Activated naive CD4-positive, alpha-beta T cell treated with anti-CD3 and anti-CD28 coated beads for 36 hours (primary cell): ENCODE measurements at regions of chr6 and their contacts with region 1.

Region 1: GRCh38 chr6:30541515-30542403 is 14.5 kb downstream of the GNL1 start:
- DNase-seq: peak; percentile 89
- H3K4me3 Mint-ChIP-seq: peak overlapping the region; percentile 71
- H3K27ac Mint-ChIP-seq: peak overlapping the region; percentile 20
- H3K4me1 Mint-ChIP-seq: peaks cover 41% of the 10 kb centered on the region
- H3K27me3 Mint-ChIP-seq: no peaks in the 10 kb centered on the region

Region 2: DNA sequence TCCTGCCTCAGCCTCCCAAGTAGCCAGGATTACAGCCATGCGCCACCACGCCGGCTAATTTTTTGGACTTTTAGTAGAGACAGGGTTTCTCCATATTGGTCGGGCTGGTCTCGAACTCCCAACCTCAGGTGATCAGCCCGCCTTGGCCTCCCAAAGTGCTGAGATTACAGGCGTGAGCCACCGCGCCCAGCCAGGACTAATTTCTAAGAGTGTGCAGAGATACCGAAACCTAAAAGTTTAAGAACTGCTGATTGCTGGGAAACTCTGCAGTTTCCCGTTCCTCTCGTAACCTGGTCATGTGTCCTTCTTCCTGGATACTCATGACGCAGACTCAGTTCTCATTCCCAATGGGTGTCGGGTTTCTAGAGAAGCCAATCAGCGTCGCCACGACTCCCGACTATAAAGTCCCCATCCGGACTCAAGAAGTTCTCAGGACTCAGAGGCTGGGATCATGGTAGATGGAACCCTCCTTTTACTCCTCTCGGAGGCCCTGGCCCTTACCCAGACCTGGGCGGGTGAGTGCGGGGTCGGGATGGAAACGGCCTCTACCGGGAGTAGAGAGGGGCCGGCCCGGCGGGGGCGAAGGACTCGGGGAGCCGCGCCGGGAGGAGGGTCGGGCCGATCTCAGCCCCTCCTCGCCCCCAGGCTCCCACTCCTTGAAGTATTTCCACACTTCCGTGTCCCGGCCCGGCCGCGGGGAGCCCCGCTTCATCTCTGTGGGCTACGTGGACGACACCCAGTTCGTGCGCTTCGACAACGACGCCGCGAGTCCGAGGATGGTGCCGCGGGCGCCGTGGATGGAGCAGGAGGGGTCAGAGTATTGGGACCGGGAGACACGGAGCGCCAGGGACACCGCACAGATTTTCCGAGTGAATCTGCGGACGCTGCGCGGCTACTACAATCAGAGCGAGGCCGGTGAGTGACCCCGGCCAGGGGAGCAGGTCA is 52.4 kb before region 1 on chr6 and contains the start of gene HLA-E:
- CTCF ChIA-PET with region 1: interaction called, 367 read pairs
- intact Hi-C with region 1: no loop called
- DNase-seq: peak; percentile 95
- H3K4me3 Mint-ChIP-seq: peak within 1 kb of the TSS; percentile 90
- H3K27ac Mint-ChIP-seq: peak within 1 kb of the TSS; percentile 97
- H3K4me1 Mint-ChIP-seq: peaks cover 54% of the 10 kb centered on the region
- H3K27me3 Mint-ChIP-seq: no peaks in the 10 kb centered on the region
- total RNA-seq, gene HLA-E: 598 to 608 TPM

Region 3: DNA sequence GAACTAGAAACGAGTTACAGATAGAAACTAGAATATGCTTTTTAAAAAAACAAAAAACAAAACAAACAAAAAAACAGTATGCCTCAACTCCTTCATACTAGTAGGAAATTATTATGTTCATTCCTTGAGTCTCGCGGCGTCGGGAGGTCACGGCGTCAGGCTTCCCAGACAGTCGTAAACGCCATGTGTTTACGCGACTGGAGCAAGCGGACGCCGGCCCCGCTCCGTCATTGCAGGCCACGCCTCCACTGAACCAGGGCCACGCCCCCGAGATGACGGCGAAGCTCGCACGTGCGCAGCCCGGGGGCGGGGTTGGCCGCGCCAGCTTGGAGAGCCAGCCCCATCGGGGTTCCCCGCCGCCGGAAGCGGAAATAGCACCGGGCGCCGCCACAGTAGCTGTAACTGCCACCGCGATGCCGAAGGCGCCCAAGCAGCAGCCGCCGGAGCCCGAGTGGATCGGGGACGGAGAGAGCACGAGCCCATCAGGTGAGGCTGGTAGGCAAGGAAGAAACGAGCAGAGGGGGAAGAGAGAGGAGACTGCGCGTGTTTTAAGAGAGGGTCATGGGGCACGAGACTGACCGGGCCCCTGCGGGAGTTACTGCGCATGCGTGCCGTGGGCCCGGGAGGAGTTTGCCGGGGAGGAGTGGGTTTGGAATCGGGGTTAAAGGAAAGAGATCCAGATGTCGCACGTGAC is 29.5 kb after region 1 on chr6 and contains the start of gene ABCF1:
- CTCF ChIA-PET with region 1: interaction called, 10 read pairs
- intact Hi-C with region 1: loop called (anchors 1 kb)
- DNase-seq: peak; percentile 99
- H3K4me3 Mint-ChIP-seq: peak within 1 kb of the TSS; percentile 98
- H3K27ac Mint-ChIP-seq: peak within 1 kb of the TSS; percentile 95
- H3K4me1 Mint-ChIP-seq: peaks cover 70% of the 10 kb centered on the region
- H3K27me3 Mint-ChIP-seq: no peaks in the 10 kb centered on the region
- total RNA-seq, gene ABCF1: 79.5 to 82.7 TPM

Region 4: DNA sequence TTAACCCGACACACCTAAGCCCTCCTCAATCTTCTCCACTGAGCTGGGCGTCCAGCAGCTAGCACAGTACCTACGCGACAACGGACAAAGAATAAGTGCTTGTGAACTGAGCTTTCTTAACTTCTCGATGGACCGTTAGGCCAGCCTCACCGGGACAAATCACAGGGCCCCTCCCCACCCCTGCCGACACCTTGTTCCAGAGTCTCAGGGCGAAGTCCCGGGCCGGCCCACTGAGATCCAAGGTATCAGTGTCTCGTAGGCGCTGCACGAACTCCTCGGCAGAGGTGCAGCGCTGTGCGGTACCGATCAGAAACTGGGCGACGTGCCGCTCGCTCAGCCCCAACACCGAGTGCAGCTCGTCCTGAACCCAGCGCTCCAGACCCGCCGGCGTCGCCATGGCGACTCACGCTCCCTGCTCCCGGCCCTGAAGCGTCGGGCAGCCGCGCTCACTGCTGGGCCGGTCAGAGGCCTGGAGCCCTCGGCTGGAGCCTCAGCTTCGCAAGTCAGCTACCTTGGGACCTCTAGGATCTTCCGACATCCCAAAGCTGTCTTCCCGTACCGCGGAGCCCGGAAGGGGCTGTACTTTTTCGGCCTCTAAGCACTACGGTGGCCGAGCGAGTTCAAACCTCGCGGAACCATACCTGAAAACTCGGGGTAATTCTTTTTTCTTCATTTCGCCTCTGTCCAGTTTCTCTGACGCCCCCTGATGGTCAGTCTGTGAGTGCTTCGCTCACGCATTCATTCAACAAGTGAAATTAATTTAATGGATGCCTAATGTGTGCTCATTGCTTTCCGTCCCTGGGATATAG is 130.9 kb after region 1 on chr6 and contains the start of gene DHX16:
- CTCF ChIA-PET with region 1: interaction called, 4 read pairs
- intact Hi-C with region 1: loop called (anchors 1 kb)
- DNase-seq: peak; percentile 94
- H3K4me3 Mint-ChIP-seq: peak within 1 kb of the TSS; percentile 80
- H3K27ac Mint-ChIP-seq: peak within 1 kb of the TSS; percentile 80
- H3K4me1 Mint-ChIP-seq: peaks cover 26% of the 10 kb centered on the region
- H3K27me3 Mint-ChIP-seq: no peaks in the 10 kb centered on the region
- total RNA-seq, gene DHX16: 25.7 to 27.7 TPM

Region 5: DNA sequence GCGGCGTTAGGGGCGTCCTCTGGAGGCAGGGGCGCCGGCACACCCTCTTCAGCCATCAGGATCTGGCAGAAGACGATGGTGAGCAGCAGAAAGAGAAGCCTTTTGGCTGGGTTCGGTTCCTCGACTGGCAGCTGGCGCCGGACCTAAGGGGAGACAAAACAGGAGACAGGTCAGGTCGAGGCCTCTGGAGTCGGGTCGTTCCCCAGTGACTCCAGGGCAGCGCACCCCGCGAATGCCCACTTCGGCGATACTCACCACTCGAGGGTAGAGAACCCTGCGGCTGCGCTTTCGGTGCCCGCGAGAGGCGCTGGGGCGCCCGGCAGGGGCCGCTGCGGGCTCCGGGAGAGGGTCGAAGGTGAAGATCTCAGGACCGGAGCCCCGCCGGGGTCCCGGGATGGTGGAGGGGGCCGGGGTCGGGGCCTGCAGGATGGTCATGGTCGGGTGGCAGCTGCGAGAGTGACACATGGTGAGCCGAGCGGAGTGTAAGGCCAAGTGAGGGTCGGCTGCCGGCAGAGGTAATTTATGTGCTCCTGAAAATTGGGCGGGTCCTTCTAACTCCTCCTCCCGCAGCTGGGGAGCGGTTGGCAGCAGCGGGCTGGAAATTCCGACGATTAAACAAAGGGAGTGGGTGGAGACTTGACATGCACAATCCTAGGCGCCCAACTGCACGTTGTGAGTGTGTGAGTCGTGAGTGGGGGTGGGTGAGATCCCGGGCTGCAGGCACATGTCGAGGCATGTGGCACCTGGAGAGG is 202.5 kb after region 1 on chr6 and contains the start of gene IER3:
- CTCF ChIA-PET with region 1: no interaction called
- intact Hi-C with region 1: no loop called
- DNase-seq: peak; percentile 90
- H3K4me3 Mint-ChIP-seq: peak within 1 kb of the TSS; percentile 94
- H3K27ac Mint-ChIP-seq: peak within 1 kb of the TSS; percentile 96
- H3K4me1 Mint-ChIP-seq: peaks cover 55% of the 10 kb centered on the region
- H3K27me3 Mint-ChIP-seq: no peaks in the 10 kb centered on the region
- total RNA-seq, gene IER3: 32.2 to 34.0 TPM

Region 6: GRCh38 chr6:30914076-30914853 is 372.5 kb after region 1 on chr6 and contains the start of gene VARS2:
- CTCF ChIA-PET with region 1: no interaction called
- intact Hi-C with region 1: loop called (anchors 5 kb)
- DNase-seq: peak; percentile 90
- H3K4me3 Mint-ChIP-seq: peak within 1 kb of the TSS; percentile 87
- H3K27ac Mint-ChIP-seq: peak within 1 kb of the TSS; percentile 86
- H3K4me1 Mint-ChIP-seq: peaks cover 28% of the 10 kb centered on the region
- H3K27me3 Mint-ChIP-seq: no peaks in the 10 kb centered on the region
- total RNA-seq, gene VARS2: 78.1 to 82.8 TPM